ENCODE measurements at regions of chr5 and their contacts with region 1.

Region 1: GRCh38 chr5:94968507-94969095 is 316.3 kb downstream of the MCTP1 start:
- DNase-seq: peak; percentile 77
- H3K4me3 ChIP-seq: no peak overlapping the region
- H3K27ac ChIP-seq: no peak overlapping the region
- H3K4me1 ChIP-seq: peaks cover 7% of the 10 kb centered on the region
- H3K27me3 ChIP-seq: no peaks in the 10 kb centered on the region
- CTCF ChIP-seq: peak; percentile 44 to 54
- POLR2A ChIP-seq: no peak

Region 2: DNA sequence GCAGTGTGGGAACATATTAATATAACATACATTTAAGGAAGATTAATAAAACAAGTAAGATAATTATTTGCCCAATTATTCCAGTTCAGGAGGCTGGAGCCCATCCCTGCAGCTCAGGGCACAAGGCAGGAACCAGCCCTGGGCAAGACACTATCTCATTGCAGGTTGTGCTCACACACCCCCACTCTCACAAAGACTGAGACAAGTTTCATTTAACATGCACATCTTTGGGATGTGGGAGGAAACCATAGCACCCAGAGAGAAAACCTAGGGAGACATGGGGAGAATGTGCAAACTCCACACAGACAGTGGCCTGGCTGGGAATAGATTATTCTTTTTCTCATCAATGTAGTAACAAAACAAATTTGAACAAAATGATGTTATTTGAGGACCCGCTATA is 37.2 kb after region 1 on chr5:
- CTCF ChIA-PET with region 1: no interaction called
- POLR2A ChIA-PET with region 1: no interaction called
- dilution Hi-C with region 1: no loop called
- intact Hi-C with region 1: no loop called
- DNase-seq: no peak
- H3K4me3 ChIP-seq: no peak overlapping the region
- H3K27ac ChIP-seq: no peak overlapping the region
- H3K4me1 ChIP-seq: no peaks in the 10 kb centered on the region
- H3K27me3 ChIP-seq: no peaks in the 10 kb centered on the region
- CTCF ChIP-seq: no peak
- POLR2A ChIP-seq: no peak

Region 3: GRCh38 chr5:95072281-95072680 is 103.7 kb after region 1 on chr5:
- CTCF ChIA-PET with region 1: interaction called, 10 read pairs
- POLR2A ChIA-PET with region 1: no interaction called
- dilution Hi-C with region 1: no loop called
- intact Hi-C with region 1: loop called (anchors 2 kb)
- DNase-seq: no peak
- H3K4me3 ChIP-seq: no peak overlapping the region
- H3K27ac ChIP-seq: no peak overlapping the region
- H3K4me1 ChIP-seq: peaks cover 24% of the 10 kb centered on the region
- H3K27me3 ChIP-seq: no peaks in the 10 kb centered on the region
- CTCF ChIP-seq: no peak
- POLR2A ChIP-seq: no peak

Region 4: DNA sequence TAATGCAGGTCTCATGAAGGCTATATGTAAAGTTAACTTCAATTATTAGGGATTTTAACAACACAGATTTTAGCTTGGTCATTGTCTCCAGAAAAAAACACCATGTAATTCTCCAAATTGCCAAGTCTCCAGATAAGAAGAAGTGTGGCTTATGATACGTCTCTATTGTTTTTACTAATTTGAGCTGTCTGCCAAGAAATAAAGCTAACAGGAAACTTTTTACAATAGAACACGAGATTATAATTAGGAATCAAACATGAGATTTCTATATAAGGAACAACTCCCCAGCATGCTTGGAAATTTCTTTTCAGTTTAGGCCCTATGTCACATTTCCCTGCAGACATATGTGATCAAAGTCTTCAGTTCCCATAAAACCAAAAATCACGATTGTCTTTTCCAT is 173.5 kb after region 1 on chr5:
- CTCF ChIA-PET with region 1: interaction called, 11 read pairs
- POLR2A ChIA-PET with region 1: no interaction called
- dilution Hi-C with region 1: no loop called
- intact Hi-C with region 1: no loop called
- DNase-seq: peak; percentile 81
- H3K4me3 ChIP-seq: no peak overlapping the region
- H3K27ac ChIP-seq: no peak overlapping the region
- H3K4me1 ChIP-seq: peaks cover 27% of the 10 kb centered on the region
- H3K27me3 ChIP-seq: no peaks in the 10 kb centered on the region
- CTCF ChIP-seq: no peak
- POLR2A ChIP-seq: no peak

Region 5: DNA sequence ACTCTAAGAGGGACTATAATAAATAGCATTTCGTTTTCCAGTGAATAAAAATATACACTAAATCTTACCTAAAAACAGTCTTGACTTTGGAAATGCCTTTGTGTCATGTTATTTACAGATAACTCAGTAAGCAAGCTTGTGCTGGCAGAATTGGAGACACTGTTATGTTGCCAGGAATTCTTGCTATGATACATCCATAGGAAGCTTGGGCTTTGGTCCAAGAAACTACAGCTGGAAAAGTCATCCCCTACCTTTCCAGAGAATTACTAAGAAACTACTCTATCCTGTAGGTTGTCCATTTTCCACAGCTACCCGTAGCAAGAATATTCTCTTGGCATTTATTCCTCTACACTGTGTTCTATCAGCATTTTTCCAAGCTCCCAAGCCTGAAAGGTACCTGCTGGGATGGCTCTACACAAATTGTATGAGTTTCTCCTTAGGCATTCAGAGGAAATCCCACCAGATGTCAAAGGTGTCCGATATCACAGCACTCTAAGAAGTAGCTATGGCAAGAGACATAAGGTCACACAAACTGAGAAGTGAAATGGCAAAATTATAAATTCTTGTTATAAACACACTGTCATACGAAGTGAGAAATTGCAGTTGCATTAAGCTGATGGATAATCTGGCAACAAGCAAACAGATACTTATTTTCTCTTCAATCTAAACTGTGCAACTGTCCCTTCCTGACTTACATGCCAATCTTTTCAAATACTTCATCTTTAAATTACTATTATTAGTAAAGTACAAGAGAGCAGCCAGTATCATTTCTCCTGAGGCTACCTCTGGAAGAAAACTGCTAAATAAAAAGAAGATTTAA is 247.7 kb after region 1 on chr5:
- CTCF ChIA-PET with region 1: interaction called, 10 read pairs
- POLR2A ChIA-PET with region 1: no interaction called
- dilution Hi-C with region 1: no loop called
- intact Hi-C with region 1: no loop called
- DNase-seq: peak; percentile 79
- H3K4me3 ChIP-seq: no peak overlapping the region
- H3K27ac ChIP-seq: peak overlapping the region; percentile 91
- H3K4me1 ChIP-seq: peaks cover 27% of the 10 kb centered on the region
- H3K27me3 ChIP-seq: no peaks in the 10 kb centered on the region
- CTCF ChIP-seq: no peak
- POLR2A ChIP-seq: no peak

Region 6: GRCh38 chr5:95261437-95262175 is 293.0 kb after region 1 on chr5:
- CTCF ChIA-PET with region 1: interaction called, 208 read pairs
- POLR2A ChIA-PET with region 1: no interaction called
- dilution Hi-C with region 1: no loop called
- intact Hi-C with region 1: loop called (anchors 1 kb)
- DNase-seq: peak; percentile 72
- H3K4me3 ChIP-seq: no peak overlapping the region
- H3K27ac ChIP-seq: no peak overlapping the region
- H3K4me1 ChIP-seq: peaks cover 4% of the 10 kb centered on the region
- H3K27me3 ChIP-seq: peaks cover 3 to 8% of the 10 kb centered on the region in 2 experiments
- CTCF ChIP-seq: peak; percentile 39 to 41
- POLR2A ChIP-seq: no peak

Measured in endothelial cell of umbilical vein (primary cell).